Posterior cingulate gyrus (tissue), 11 donors: ENCODE measurements at regions of chr14 and their contacts with region 1.

Region 1: DNA sequence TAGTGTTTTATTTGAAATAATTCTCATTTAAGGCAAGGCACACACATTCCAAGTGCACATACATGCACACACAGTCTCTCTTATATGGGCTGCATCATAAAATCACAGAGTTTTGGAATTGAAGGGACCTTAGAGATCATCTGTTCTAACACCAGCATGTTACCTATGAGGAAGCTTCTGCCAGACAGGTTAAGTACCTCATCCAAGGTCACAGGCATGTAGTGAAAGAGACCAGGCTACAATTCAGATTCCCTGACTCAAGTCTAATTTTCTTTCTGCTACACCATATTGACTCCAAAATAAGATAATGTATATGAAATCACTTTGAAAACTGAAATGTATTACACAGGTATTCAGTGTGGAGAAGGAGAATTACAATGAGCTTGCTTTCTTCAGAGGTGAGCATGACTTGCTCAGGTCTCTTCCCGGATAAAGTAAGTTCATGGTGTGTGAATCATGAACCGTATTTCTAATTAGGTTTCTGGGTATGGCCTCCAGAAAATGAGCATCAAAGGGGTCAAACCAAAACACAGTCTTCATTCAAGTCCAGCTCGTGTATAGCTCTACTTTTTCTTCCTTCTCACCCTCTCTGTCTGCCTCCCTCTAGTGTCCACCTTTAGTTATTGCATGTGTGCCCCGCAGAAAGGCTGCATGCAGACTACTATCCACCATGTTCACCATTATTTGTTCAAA is 411.9 kb downstream of the FUT8 start:
- DNase-seq: peak in 5 of 10 donors; percentile 46 to 86 (median 53)

Region 2: GRCh38 chr14:65164068-65164824 is 660.2 kb before region 1 on chr14:
- intact Hi-C with region 1: loop called (anchors 1 kb)
- DNase-seq: peak in 2 of 10 donors; percentile 38 to 42

Region 3: GRCh38 chr14:65704850-65705249 is 119.6 kb before region 1 on chr14:
- intact Hi-C with region 1: no loop called
- DNase-seq: no peak

Region 4: DNA sequence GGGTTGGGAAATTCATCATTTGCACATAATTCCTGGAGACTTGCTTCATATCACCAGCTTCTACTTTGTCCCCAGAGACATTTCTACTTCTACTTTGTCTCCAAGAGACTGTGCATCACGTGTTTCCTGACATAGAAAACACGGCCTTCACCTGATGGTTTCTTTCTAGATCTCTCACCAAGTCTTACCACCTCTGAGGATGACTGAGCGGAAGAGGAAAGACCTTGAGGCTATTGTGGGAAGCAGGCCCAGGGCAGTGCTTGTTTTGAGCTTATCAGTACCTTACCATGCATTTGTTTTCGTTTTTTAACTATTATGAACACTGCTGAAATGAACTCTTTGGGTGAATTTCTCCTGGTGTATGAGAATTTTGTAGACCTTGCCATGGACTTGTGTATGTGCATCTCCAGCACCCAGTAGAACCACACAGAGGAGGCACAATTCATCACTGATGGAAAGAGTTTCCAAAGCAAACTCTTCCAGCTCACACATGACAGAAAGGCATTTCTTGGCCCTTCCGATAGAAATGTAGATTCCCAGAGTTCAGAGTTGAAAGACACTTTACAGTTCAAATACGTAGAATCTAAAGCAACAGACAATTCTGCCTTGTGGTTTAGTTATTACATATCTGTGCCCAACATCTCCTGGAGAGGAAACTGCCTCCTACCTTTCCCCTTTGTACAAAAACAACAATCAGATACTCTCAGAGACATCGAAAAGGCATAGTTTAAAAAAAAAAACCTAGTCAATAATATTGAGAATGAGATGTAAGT is 22.8 kb after region 1 on chr14:
- intact Hi-C with region 1: no loop called
- DNase-seq: no peak